ENCODE measurements at regions of chr6 and their contacts with region 1.

Region 1: GRCh38 chr6:41027799-41028628 is 11.0 kb downstream of the UNC5CL start:
- DNase-seq: peak; percentile 56 to 79 (median 70)
- H3K4me3 ChIP-seq: peak overlapping the region; percentile 63 to 82
- H3K4me3 Mint-ChIP-seq: peak overlapping the region; percentile 78 to 91 (median 86)
- H3K27ac ChIP-seq: peak overlapping the region; percentile 45
- H3K27ac Mint-ChIP-seq: peak overlapping the region; percentile 68 to 96 (median 89)
- H3K4me1 ChIP-seq: peaks cover 25% of the 10 kb centered on the region
- H3K4me1 Mint-ChIP-seq: peaks cover 19 to 22% (median 20%) of the 10 kb centered on the region in 4 donors
- H3K27me3 ChIP-seq: no peaks in the 10 kb centered on the region
- H3K27me3 Mint-ChIP-seq: no peaks in the 10 kb centered on the region

Region 2: DNA sequence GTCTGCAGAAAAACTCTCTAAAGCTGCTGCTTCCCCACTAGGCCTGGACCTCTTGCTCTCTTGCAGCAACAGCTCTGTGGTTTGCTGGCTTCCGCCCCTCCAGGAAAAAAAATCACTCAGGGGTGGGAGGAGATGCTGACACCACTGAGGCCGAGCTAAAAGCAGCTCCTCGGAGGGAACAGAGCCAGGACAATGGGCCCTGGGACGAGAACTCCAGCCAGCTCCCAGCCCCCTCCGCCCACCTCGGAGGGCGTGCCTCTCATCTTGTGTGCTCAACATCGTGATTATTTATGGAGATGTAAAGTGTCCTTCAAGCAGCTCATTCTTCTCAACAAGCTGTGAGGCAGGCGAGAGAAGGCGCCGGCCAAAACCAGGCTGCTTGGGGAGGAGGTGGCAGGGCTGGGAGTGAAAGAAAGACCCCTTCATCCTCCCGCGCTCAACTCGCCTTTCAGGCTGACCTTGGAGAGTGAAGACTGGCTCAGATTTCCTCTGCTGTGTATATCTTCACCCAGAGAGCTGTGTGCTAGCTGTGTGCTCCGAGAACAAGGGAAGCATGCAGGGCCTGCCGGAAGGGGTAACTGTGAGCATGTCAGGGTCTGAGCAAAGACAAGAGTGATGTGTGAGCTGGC is 387.3 kb before region 1 on chr6:
- CTCF ChIA-PET with region 1: no interaction called
- POLR2A ChIA-PET with region 1: no interaction called
- intact Hi-C with region 1: no loop called
- DNase-seq: peak in 2 of 5 donors; percentile 2 to 7
- H3K4me3 ChIP-seq: no peak overlapping the region
- H3K4me3 Mint-ChIP-seq: peak overlapping the region in 6 of 8 donors; percentile 2 to 64 (median 20)
- H3K27ac ChIP-seq: no peak overlapping the region
- H3K27ac Mint-ChIP-seq: peak overlapping the region in 2 of 7 donors; percentile 25 to 73
- H3K4me1 ChIP-seq: peaks cover 7% of the 10 kb centered on the region
- H3K4me1 Mint-ChIP-seq: peaks cover 8 to 9% (median 9%) of the 10 kb centered on the region in 4 donors
- H3K27me3 ChIP-seq: no peaks in the 10 kb centered on the region
- H3K27me3 Mint-ChIP-seq: peaks cover 0 to 10% of the 10 kb centered on the region in 2 donors

Region 3: GRCh38 chr6:40999569-40999968 is 28.4 kb before region 1 on chr6:
- CTCF ChIA-PET with region 1: interaction called, 41 read pairs
- POLR2A ChIA-PET with region 1: no interaction called
- intact Hi-C with region 1: no loop called
- DNase-seq: no peak
- H3K4me3 ChIP-seq: no peak overlapping the region
- H3K4me3 Mint-ChIP-seq: no peak overlapping the region
- H3K27ac ChIP-seq: no peak overlapping the region
- H3K27ac Mint-ChIP-seq: no peak overlapping the region
- H3K4me1 ChIP-seq: no peaks in the 10 kb centered on the region
- H3K4me1 Mint-ChIP-seq: no peaks in the 10 kb centered on the region
- H3K27me3 ChIP-seq: no peaks in the 10 kb centered on the region
- H3K27me3 Mint-ChIP-seq: peaks cover 17 to 28% of the 10 kb centered on the region in 2 donors

Region 4: GRCh38 chr6:41013466-41014153 is 14.4 kb before region 1 on chr6:
- CTCF ChIA-PET with region 1: interaction called, 88 read pairs
- POLR2A ChIA-PET with region 1: interaction called, 10 read pairs
- intact Hi-C with region 1: no loop called
- DNase-seq: no peak
- H3K4me3 ChIP-seq: no peak overlapping the region
- H3K4me3 Mint-ChIP-seq: no peak overlapping the region
- H3K27ac ChIP-seq: no peak overlapping the region
- H3K27ac Mint-ChIP-seq: peak overlapping the region in 2 of 7 donors; percentile 43 to 49
- H3K4me1 ChIP-seq: no peaks in the 10 kb centered on the region
- H3K4me1 Mint-ChIP-seq: no peaks in the 10 kb centered on the region
- H3K27me3 ChIP-seq: no peaks in the 10 kb centered on the region
- H3K27me3 Mint-ChIP-seq: peaks cover 2 to 4% of the 10 kb centered on the region in 2 donors

Region 5: DNA sequence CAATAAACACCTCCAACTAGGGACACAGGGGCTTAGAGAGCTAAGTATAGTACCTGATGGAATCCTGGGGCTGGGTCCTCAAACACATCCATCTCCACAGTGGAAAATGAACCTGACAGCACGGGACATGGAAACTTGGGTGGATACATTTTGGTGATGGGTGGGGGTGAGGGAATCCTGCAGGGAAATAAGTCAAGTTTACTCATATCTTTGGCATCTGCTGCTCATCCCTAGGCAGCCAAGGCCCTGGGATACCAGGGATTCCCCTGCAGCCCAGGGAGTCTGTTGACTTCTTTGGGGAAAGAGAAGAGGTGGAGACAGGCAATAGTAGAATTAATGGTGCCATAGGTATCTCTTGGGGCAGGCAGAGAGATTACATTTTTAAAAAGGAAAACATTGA is 31.5 kb after region 1 on chr6:
- CTCF ChIA-PET with region 1: interaction called, 10 read pairs
- POLR2A ChIA-PET with region 1: interaction called, 7 read pairs
- intact Hi-C with region 1: no loop called
- DNase-seq: no peak
- H3K4me3 ChIP-seq: no peak overlapping the region
- H3K4me3 Mint-ChIP-seq: no peak overlapping the region
- H3K27ac ChIP-seq: no peak overlapping the region
- H3K27ac Mint-ChIP-seq: no peak overlapping the region
- H3K4me1 ChIP-seq: no peaks in the 10 kb centered on the region
- H3K4me1 Mint-ChIP-seq: peaks cover 0 to 4% (median under 1%) of the 10 kb centered on the region in 4 donors
- H3K27me3 ChIP-seq: no peaks in the 10 kb centered on the region
- H3K27me3 Mint-ChIP-seq: no peaks in the 10 kb centered on the region

Measured in CD4-positive, alpha-beta memory T cell (primary cell).